ENCODE measurements at regions of chr4 and their contacts with region 1.

Region 1: GRCh38 chr4:76585897-76586360 is 150.9 kb downstream of the SHROOM3 start:
- DNase-seq: peak; percentile 95
- H3K4me3 ChIP-seq: peak overlapping the region; percentile 46
- H3K4me3 Mint-ChIP-seq: peak overlapping the region; percentile 80
- H3K27ac Mint-ChIP-seq: peak overlapping the region; percentile 96
- H3K4me1 ChIP-seq: peaks cover 37% of the 10 kb centered on the region
- H3K4me1 Mint-ChIP-seq: peaks cover 22% of the 10 kb centered on the region
- H3K27me3 ChIP-seq: no peaks in the 10 kb centered on the region
- H3K27me3 Mint-ChIP-seq: no peaks in the 10 kb centered on the region
- CTCF ChIP-seq: peak in 1 of 2 experiments; percentile 39

Region 2: DNA sequence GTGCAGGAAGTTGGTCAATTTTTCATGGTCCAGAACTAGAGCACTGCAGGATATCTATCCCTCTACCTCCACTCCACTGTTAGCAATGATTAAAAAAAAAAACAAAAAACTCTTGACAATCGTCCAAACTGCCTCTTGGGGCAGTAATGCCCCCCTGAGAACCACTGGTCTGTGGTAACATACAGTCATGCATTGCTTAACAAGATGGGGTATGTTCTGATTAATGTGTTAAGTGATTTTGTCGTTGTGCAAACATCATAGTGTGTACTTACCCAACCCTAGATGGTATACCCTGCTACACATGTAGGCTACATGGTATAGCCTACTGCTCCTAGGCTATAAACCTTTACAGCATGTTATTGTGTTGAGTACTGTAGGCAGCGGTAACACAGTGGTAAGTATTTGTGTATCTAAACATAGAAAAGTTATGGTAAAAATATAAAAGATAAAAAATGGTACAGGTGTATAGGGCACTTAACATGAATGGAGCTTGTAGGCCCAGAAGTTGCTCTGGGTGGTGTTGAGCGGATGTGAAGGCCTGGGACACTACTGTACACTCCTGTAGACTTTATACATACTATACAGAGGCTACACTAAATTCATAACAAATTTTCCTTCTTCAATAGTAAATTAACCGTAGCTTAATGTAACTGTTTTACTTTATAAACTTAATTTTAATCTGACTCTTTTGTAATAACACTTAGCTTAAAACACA is 477.3 kb before region 1 on chr4:
- CTCF ChIA-PET with region 1: no interaction called
- POLR2A ChIA-PET with region 1: no interaction called
- intact Hi-C with region 1: no loop called
- DNase-seq: peak in 1 of 2 experiments; percentile 18
- H3K4me3 ChIP-seq: no peak overlapping the region
- H3K4me3 Mint-ChIP-seq: no peak overlapping the region
- H3K27ac Mint-ChIP-seq: no peak overlapping the region
- H3K4me1 ChIP-seq: no peaks in the 10 kb centered on the region
- H3K4me1 Mint-ChIP-seq: no peaks in the 10 kb centered on the region
- H3K27me3 ChIP-seq: no peaks in the 10 kb centered on the region
- H3K27me3 Mint-ChIP-seq: no peaks in the 10 kb centered on the region
- CTCF ChIP-seq: peak in 1 of 2 experiments; percentile 8

Region 3: GRCh38 chr4:76125816-76126215 is 460.1 kb before region 1 on chr4:
- CTCF ChIA-PET with region 1: no interaction called
- POLR2A ChIA-PET with region 1: no interaction called
- intact Hi-C with region 1: no loop called
- DNase-seq: no peak
- H3K4me3 ChIP-seq: no peak overlapping the region
- H3K4me3 Mint-ChIP-seq: no peak overlapping the region
- H3K27ac Mint-ChIP-seq: no peak overlapping the region
- H3K4me1 ChIP-seq: no peaks in the 10 kb centered on the region
- H3K4me1 Mint-ChIP-seq: no peaks in the 10 kb centered on the region
- H3K27me3 ChIP-seq: no peaks in the 10 kb centered on the region
- H3K27me3 Mint-ChIP-seq: no peaks in the 10 kb centered on the region
- CTCF ChIP-seq: no peak

Region 4: GRCh38 chr4:76546282-76547171 is 39.4 kb before region 1 on chr4:
- CTCF ChIA-PET with region 1: interaction called, 3 read pairs
- POLR2A ChIA-PET with region 1: no interaction called
- intact Hi-C with region 1: loop called (anchors 1 kb)
- DNase-seq: no peak
- H3K4me3 ChIP-seq: no peak overlapping the region
- H3K4me3 Mint-ChIP-seq: no peak overlapping the region
- H3K27ac Mint-ChIP-seq: peak overlapping the region; percentile 69
- H3K4me1 ChIP-seq: peaks cover 25% of the 10 kb centered on the region
- H3K4me1 Mint-ChIP-seq: peaks cover 29% of the 10 kb centered on the region
- H3K27me3 ChIP-seq: no peaks in the 10 kb centered on the region
- H3K27me3 Mint-ChIP-seq: no peaks in the 10 kb centered on the region
- CTCF ChIP-seq: no peak

Region 5: DNA sequence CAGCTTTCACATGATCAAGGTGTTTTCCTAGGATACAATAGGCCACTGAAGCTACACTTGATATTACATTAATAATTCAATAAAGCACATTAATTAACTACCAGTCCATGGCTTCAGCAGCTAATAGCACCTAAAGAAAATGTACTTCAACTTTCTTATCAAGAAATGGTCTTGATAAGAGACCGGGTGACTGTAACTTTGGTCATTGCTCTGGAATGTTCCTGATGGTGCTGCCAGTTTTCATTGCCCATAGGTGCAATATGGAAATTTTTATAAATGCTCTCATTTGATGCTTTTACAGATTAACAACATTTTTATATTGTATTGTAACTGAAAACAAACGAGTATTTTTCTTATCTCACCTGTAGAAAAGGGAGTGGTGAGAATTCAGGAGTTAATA is 14.5 kb after region 1 on chr4:
- CTCF ChIA-PET with region 1: interaction called, 3 read pairs
- POLR2A ChIA-PET with region 1: interaction called, 4 read pairs
- intact Hi-C with region 1: loop called (anchors 1 kb)
- DNase-seq: peak in 1 of 2 experiments; percentile 54
- H3K4me3 ChIP-seq: no peak overlapping the region
- H3K4me3 Mint-ChIP-seq: no peak overlapping the region
- H3K27ac Mint-ChIP-seq: peak overlapping the region; percentile 90
- H3K4me1 ChIP-seq: peaks cover 71% of the 10 kb centered on the region
- H3K4me1 Mint-ChIP-seq: peaks cover 49% of the 10 kb centered on the region
- H3K27me3 ChIP-seq: no peaks in the 10 kb centered on the region
- H3K27me3 Mint-ChIP-seq: no peaks in the 10 kb centered on the region
- CTCF ChIP-seq: no peak

Region 6: GRCh38 chr4:76665139-76665538 is 79.2 kb after region 1 on chr4:
- CTCF ChIA-PET with region 1: no interaction called
- POLR2A ChIA-PET with region 1: no interaction called
- intact Hi-C with region 1: loop called (anchors 2 kb)
- DNase-seq: peak in 1 of 2 experiments; percentile 47
- H3K4me3 ChIP-seq: no peak overlapping the region
- H3K4me3 Mint-ChIP-seq: no peak overlapping the region
- H3K27ac Mint-ChIP-seq: peak overlapping the region; percentile 43
- H3K4me1 ChIP-seq: peaks cover 49% of the 10 kb centered on the region
- H3K4me1 Mint-ChIP-seq: peaks cover 18% of the 10 kb centered on the region
- H3K27me3 ChIP-seq: no peaks in the 10 kb centered on the region
- H3K27me3 Mint-ChIP-seq: no peaks in the 10 kb centered on the region
- CTCF ChIP-seq: no peak